SK-N-SH (cell line): ENCODE measurements at regions of chr4 and their contacts with region 1.

Region 1: GRCh38 chr4:165532976-165533375 is 154.2 kb downstream of the CPE start:
- DNase-seq: no peak
- H3K4me3 ChIP-seq: no peak overlapping the region
- H3K27ac ChIP-seq: no peak overlapping the region
- H3K4me1 ChIP-seq: no peaks in the 10 kb centered on the region
- H3K27me3 ChIP-seq: no peaks in the 10 kb centered on the region
- CTCF ChIP-seq: no peak
- EP300 ChIP-seq: no peak
- RAD21 ChIP-seq: no peak

Region 2: GRCh38 chr4:166091912-166092510 is 559.0 kb after region 1 on chr4:
- CTCF ChIA-PET with region 1: interaction called, 14 read pairs
- POLR2A ChIA-PET with region 1: no interaction called
- DNase-seq: peak; percentile 9
- H3K4me3 ChIP-seq: no peak overlapping the region; a peak in 1 of 4 replicates
- H3K27ac ChIP-seq: no peak overlapping the region
- H3K4me1 ChIP-seq: no peaks in the 10 kb centered on the region; a peak in 1 of 4 replicates
- H3K27me3 ChIP-seq: no peaks in the 10 kb centered on the region; the same call in 1 of the 2 replicates
- CTCF ChIP-seq: peak; percentile 93
- EP300 ChIP-seq: no peak
- RAD21 ChIP-seq: peak; percentile 84